Naive thymus-derived CD4-positive, alpha-beta T cell (primary cell): ENCODE measurements at regions of chr5 and their contacts with region 1.

Region 1: DNA sequence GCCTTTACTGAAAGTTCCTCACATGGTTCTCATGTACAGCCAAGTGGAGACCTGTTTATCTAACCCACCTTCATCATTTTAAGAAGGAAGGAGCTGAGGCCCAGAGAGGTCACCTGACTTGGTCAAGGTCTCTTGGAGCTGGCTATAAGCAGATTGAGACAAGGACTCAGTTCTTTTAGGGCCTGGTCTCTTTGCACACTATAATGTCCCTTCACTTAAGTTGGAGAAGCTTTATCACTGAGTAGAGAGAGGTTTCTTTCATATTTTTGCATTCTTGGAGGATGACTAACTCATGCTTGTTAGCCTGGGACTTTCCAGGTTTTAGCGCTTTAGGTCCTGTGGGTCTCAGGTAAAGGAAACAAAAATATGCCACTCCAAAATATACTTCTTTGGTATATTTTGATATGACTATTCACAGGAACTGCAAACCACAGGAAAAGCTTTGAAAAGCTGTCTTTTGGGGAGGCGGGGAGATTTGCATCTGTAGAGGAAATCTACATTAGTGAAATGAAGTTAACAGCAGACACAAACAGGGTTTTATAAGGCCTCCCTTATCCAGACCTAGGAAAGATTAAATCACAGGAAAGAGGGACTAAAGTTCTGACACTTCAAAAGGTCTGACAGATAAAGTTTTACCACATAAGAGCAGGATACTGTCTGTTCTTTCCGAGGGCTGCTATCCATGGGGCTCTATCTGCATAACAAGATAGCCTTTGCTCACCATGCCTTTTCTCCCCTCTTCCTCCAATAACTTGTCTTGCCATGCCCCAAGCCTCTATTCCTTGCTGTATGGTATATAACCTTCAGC is 95.8 kb upstream of the ANKRD55 start:
- DNase-seq: peak in 8 of 9 donors; percentile 22 to 75 (median 54)
- ATAC-seq: peak; percentile 88
- H3K4me3 ChIP-seq: peak overlapping the region; percentile 40
- H3K4me3 Mint-ChIP-seq: peak overlapping the region in 9 of 10 donors; percentile 15 to 81 (median 70)
- H3K27ac ChIP-seq: peak overlapping the region; percentile 69
- H3K27ac Mint-ChIP-seq: peak overlapping the region; percentile 46 to 95 (median 83)
- H3K4me1 ChIP-seq: peaks cover 22 to 49% of the 10 kb centered on the region in 2 donors
- H3K4me1 Mint-ChIP-seq: peaks cover 33 to 86% (median 72%) of the 10 kb centered on the region in 7 donors
- H3K27me3 ChIP-seq: no peaks in the 10 kb centered on the region
- H3K27me3 Mint-ChIP-seq: no peaks in the 10 kb centered on the region

Region 2: DNA sequence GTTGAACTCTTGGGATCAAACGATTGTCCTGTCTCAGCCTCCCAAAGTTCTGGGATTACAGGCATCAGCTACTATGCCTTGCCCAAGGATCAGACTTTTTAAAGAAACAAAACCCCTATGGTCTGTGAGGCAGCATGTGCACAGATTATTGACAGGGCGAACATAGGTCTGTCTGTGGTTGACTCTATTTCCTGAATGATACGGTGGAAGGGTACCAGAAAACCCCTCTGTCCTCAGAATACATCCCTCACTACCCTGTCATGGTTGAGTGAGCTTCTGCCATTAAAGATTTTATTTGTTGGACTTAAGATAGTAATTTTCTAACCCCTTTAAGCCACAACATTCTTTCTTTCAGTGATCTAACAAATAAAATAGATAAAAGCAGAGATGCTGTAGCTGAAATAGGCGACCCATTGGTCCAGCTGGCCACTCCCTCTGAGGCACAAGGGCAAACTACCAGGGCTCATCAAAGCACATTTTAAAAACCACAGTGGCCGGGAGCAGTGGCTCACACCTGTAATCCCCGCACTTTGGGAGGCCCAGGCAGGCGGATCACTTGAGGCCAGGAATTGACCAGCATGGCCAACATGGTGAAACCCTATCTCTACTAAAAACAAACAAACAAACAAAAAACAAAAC is 10.9 kb before region 1 on chr5:
- CTCF ChIA-PET with region 1: interaction called, 3 read pairs
- POLR2A ChIA-PET with region 1: interaction called, 29 read pairs
- intact Hi-C with region 1: loop called in 1 of 2 experiments (anchors 1 kb)
- DNase-seq: no peak
- ATAC-seq: no peak
- H3K4me3 ChIP-seq: no peak overlapping the region
- H3K4me3 Mint-ChIP-seq: no peak overlapping the region
- H3K27ac ChIP-seq: no peak overlapping the region
- H3K27ac Mint-ChIP-seq: no peak overlapping the region
- H3K4me1 ChIP-seq: peaks cover 0 to 22% of the 10 kb centered on the region in 2 donors
- H3K4me1 Mint-ChIP-seq: peaks cover 7 to 42% (median 35%) of the 10 kb centered on the region in 7 donors
- H3K27me3 ChIP-seq: no peaks in the 10 kb centered on the region
- H3K27me3 Mint-ChIP-seq: no peaks in the 10 kb centered on the region

Region 3: DNA sequence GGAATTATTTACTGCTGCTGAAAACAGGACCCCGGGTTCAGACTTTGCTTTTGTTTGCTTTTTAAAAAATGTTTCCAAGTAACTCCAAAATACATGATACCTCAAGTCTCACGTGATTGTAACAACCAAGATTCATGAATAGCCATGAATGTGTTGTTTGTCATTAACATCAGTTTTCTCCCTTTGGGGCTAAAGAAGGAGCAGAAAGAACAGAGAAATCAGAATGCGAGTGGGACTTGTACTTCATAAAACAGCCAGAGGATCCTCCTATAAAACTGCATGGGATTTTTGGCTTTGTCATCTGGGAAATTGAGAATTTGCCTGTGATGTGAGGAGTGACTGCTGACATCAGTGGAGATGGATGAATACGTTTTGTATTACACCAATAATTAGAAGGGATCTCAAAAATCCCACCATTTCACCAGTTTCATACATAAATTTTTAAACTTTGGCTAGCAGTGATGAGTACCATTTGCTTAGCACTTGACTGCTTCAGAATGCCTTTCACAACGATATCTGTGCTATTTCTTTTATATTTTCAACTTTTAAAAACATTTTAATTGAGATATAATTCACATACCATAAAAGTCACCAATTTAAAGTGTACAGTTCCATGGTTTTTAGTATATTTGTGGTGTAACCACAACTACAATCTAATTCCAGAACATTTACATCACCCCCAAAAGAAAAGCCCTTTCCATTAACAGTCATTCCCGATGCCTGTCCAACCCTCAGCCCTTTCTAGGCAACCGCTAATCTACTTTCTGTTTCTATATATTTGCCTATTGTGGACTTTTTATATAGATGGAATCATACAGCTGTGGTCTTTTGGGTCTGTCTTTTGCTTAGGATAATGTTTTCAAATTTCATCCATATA is 31.1 kb after region 1 on chr5:
- CTCF ChIA-PET with region 1: no interaction called
- POLR2A ChIA-PET with region 1: interaction called, 6 read pairs
- intact Hi-C with region 1: loop called in 1 of 2 experiments (anchors 5 kb)
- DNase-seq: no peak
- ATAC-seq: no peak
- H3K4me3 ChIP-seq: no peak overlapping the region
- H3K4me3 Mint-ChIP-seq: no peak overlapping the region
- H3K27ac ChIP-seq: no peak overlapping the region
- H3K27ac Mint-ChIP-seq: no peak overlapping the region
- H3K4me1 ChIP-seq: no peaks in the 10 kb centered on the region
- H3K4me1 Mint-ChIP-seq: peaks cover 0 to 13% (median 8%) of the 10 kb centered on the region in 7 donors
- H3K27me3 ChIP-seq: no peaks in the 10 kb centered on the region
- H3K27me3 Mint-ChIP-seq: no peaks in the 10 kb centered on the region

Region 4: DNA sequence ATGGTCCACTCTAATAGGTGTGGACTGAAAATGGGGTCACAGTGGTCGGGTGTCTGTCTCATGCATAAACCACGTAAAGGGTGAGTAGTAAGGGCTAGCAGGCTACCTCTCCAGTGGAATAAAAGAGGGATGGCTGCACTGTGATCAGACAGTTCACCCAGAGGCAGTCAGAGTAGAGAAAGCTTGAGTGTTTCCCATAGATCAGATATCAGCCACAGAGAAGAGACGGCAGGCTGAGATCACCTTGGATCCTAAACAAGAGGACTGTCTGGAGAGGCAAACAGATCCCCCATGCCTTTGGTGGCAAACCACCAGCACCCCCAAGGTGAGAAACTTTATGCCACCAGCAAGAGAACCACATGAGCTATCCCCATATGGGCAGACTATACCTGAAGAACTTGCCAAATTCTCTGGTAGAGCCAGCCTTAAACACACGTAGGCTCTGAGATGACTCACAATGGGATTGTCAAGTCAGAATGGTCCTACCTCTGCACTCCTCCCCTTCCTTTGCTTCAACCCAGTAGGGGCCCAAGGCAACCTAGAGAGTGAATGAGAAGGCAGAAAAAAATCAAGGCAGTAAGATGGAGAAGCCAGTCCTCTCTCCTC is 281.2 kb after region 1 on chr5:
- CTCF ChIA-PET with region 1: no interaction called
- POLR2A ChIA-PET with region 1: interaction called, 4 read pairs
- intact Hi-C with region 1: loop called in 1 of 2 experiments (anchors 5 kb)
- DNase-seq: peak in 1 of 9 donors; percentile 29
- ATAC-seq: peak; percentile 41
- H3K4me3 ChIP-seq: no peak overlapping the region
- H3K4me3 Mint-ChIP-seq: peak overlapping the region in 7 of 10 donors; percentile 12 to 80 (median 39)
- H3K27ac ChIP-seq: no peak overlapping the region
- H3K27ac Mint-ChIP-seq: peak overlapping the region in 8 of 9 donors; percentile 3 to 79 (median 74)
- H3K4me1 ChIP-seq: peaks cover 20 to 58% of the 10 kb centered on the region in 2 donors
- H3K4me1 Mint-ChIP-seq: peaks cover 56 to 93% (median 89%) of the 10 kb centered on the region in 7 donors
- H3K27me3 ChIP-seq: no peaks in the 10 kb centered on the region
- H3K27me3 Mint-ChIP-seq: no peaks in the 10 kb centered on the region

Region 5: GRCh38 chr5:56698463-56699381 is 369.8 kb after region 1 on chr5:
- CTCF ChIA-PET with region 1: no interaction called
- POLR2A ChIA-PET with region 1: no interaction called
- intact Hi-C with region 1: loop called in 1 of 2 experiments (anchors 10 kb)
- DNase-seq: no peak
- ATAC-seq: no peak
- H3K4me3 ChIP-seq: no peak overlapping the region
- H3K4me3 Mint-ChIP-seq: peak overlapping the region in 8 of 10 donors; percentile 33 to 70 (median 54)
- H3K27ac ChIP-seq: peak overlapping the region; percentile 25
- H3K27ac Mint-ChIP-seq: peak overlapping the region; percentile 4 to 87 (median 69)
- H3K4me1 ChIP-seq: peaks cover 12 to 60% of the 10 kb centered on the region in 2 donors
- H3K4me1 Mint-ChIP-seq: peaks cover 47 to 99% (median 80%) of the 10 kb centered on the region in 7 donors
- H3K27me3 ChIP-seq: no peaks in the 10 kb centered on the region
- H3K27me3 Mint-ChIP-seq: peaks cover 0 to 6% (median 0%) of the 10 kb centered on the region in 5 donors